ENCODE measurements at regions of chr3 and their contacts with region 1.

Region 1: DNA sequence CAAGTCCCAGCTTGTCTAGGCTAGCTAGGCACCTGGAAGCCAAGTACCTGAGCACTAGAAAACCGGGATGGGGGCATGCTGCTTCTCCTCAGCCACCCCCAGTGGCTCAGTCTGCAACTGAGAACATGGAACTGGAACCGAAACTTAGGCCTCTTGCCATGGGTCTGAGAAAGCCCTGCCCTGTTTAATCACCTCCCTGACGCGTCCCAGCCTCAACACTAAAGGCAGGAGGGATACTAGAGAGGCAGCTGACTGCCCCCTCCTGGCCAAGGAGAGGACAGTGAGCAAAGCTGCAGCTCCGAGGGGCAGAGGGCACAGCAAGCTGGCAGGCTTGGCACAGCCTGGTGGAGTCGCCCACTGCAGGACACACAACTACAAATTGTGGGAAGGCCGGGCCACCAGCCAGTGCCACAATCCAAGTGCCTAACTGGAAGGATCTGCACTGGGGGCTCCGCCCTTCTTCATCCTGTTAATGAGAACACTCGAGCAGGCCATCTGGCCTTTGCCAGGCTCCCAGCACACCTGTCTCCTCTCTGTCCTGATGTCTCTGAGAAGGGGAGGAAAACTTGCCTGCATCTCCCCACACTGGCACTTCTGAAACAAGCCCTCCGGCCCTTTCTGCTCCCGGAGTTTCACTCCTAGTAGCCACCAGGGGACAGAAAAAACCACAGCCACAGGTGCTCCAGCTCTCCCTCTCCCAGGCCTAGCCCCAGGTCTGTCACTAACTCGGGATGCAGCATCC is 53.7 kb downstream of the BDH1 start:
- DNase-seq: peak; percentile 82
- H3K4me3 Mint-ChIP-seq: no peak overlapping the region
- H3K27ac Mint-ChIP-seq: peak overlapping the region; percentile 34
- H3K4me1 Mint-ChIP-seq: peaks cover 27% of the 10 kb centered on the region
- H3K27me3 Mint-ChIP-seq: no peaks in the 10 kb centered on the region
- CTCF ChIP-seq: peak; percentile 87

Region 2: GRCh38 chr3:197125636-197126035 is 376.4 kb before region 1 on chr3:
- CTCF ChIA-PET with region 1: no interaction called
- intact Hi-C with region 1: no loop called
- DNase-seq: no peak
- H3K4me3 Mint-ChIP-seq: no peak overlapping the region
- H3K27ac Mint-ChIP-seq: no peak overlapping the region
- H3K4me1 Mint-ChIP-seq: peaks cover 9% of the 10 kb centered on the region
- H3K27me3 Mint-ChIP-seq: no peaks in the 10 kb centered on the region
- CTCF ChIP-seq: no peak

Region 3: DNA sequence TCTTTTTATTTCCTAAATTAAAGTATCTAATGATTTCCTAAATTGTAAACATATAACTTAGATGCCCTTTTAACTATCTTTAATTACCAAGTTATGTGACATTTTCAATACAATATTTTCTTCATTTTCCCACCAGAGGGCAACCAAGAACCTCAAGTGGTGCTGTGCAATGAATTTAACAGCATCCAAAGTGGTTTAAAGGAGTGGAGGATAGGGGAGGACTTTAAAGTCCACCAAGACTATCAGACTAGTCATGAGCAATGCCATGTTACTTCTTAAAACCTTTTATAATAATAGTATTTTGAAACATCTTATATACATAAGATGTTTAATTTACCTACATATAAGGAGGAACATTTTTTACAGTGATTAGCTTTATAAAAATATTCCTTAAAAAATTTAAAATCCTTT is 278.0 kb before region 1 on chr3:
- CTCF ChIA-PET with region 1: interaction called, 3 read pairs
- intact Hi-C with region 1: loop called (anchors 10 kb)
- DNase-seq: peak; percentile 24
- H3K4me3 Mint-ChIP-seq: no peak overlapping the region
- H3K27ac Mint-ChIP-seq: no peak overlapping the region
- H3K4me1 Mint-ChIP-seq: peaks cover 25% of the 10 kb centered on the region
- H3K27me3 Mint-ChIP-seq: no peaks in the 10 kb centered on the region
- CTCF ChIP-seq: peak; percentile 48

Region 4: GRCh38 chr3:197256836-197257444 is 245.1 kb before region 1 on chr3:
- CTCF ChIA-PET with region 1: interaction called, 19 read pairs
- intact Hi-C with region 1: loop called (anchors 2 kb)
- DNase-seq: peak; percentile 27
- H3K4me3 Mint-ChIP-seq: no peak overlapping the region
- H3K27ac Mint-ChIP-seq: no peak overlapping the region
- H3K4me1 Mint-ChIP-seq: peaks cover 8% of the 10 kb centered on the region
- H3K27me3 Mint-ChIP-seq: no peaks in the 10 kb centered on the region
- CTCF ChIP-seq: peak; percentile 28

Region 5: DNA sequence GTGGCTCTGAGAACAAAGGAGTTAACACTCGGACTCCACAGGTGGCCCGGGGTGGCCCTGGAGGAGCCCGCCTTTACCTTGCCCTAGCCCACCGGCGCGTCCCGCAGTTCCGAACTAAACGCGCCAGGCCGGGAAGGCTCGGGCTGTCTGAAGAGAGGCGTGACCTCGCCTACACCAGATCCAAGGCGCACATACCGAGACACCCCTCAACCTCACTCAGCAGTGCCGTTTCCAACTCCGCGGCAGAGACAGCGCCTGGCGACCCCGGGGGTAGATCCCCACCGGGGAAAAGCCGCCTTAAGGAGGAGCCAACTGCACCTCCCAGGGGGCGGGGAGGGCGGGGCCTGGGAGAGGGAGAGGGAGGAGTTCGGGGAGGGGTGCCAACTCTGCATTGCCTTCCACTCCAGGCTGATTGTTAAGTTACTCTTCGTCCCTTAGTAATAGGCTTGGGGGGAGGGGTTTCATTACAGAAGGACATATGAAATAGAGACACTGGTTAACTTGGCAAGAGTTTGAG is 203.7 kb before region 1 on chr3 and contains the start of gene DLG1:
- CTCF ChIA-PET with region 1: no interaction called
- intact Hi-C with region 1: loop called (anchors 5 kb)
- DNase-seq: peak; percentile 85
- H3K4me3 Mint-ChIP-seq: peak within 1 kb of the TSS; percentile 96
- H3K27ac Mint-ChIP-seq: peak within 1 kb of the TSS; percentile 91
- H3K4me1 Mint-ChIP-seq: peaks cover 29% of the 10 kb centered on the region
- H3K27me3 Mint-ChIP-seq: no peaks in the 10 kb centered on the region
- CTCF ChIP-seq: no peak
- total RNA-seq, gene DLG1: 105 and 127 TPM in 2 replicates

Region 6: GRCh38 chr3:197372047-197372666 is 129.9 kb before region 1 on chr3:
- CTCF ChIA-PET with region 1: no interaction called
- intact Hi-C with region 1: loop called (anchors 10 kb)
- DNase-seq: peak; percentile 62
- H3K4me3 Mint-ChIP-seq: no peak overlapping the region
- H3K27ac Mint-ChIP-seq: no peak overlapping the region
- H3K4me1 Mint-ChIP-seq: peaks cover 27% of the 10 kb centered on the region
- H3K27me3 Mint-ChIP-seq: no peaks in the 10 kb centered on the region
- CTCF ChIP-seq: no peak

Measured in Calu3 (cell line).